Heart left ventricle (tissue), 16 donors: ENCODE measurements at regions of chr4 and their contacts with region 1.

Region 1: GRCh38 chr4:123995936-123996335 is 599.3 kb downstream of the SPRY1 start:
- DNase-seq: no peak
- ATAC-seq: no peak
- H3K4me3 ChIP-seq: no peak overlapping the region
- H3K27ac ChIP-seq: no peak overlapping the region
- H3K4me1 ChIP-seq: peaks cover 0 to 3% (median 0%) of the 10 kb centered on the region in 12 donors
- H3K27me3 ChIP-seq: no peaks in the 10 kb centered on the region
- CTCF ChIP-seq: no peak
- POLR2A ChIP-seq: no peak

Region 2: GRCh38 chr4:123776254-123776653 is 219.7 kb before region 1 on chr4:
- intact Hi-C with region 1: loop called in 1 of 10 experiments (anchors 10 kb)
- DNase-seq: no peak
- ATAC-seq: no peak
- H3K4me3 ChIP-seq: no peak overlapping the region
- H3K27ac ChIP-seq: peak overlapping the region in 3 of 12 donors; percentile 41 to 73 (median 45)
- H3K4me1 ChIP-seq: peaks cover 0 to 21% (median 8%) of the 10 kb centered on the region in 12 donors
- H3K27me3 ChIP-seq: no peaks in the 10 kb centered on the region
- CTCF ChIP-seq: no peak
- POLR2A ChIP-seq: no peak

Region 3: GRCh38 chr4:123913598-123913997 is 82.3 kb before region 1 on chr4:
- intact Hi-C with region 1: no loop called
- DNase-seq: no peak
- ATAC-seq: no peak
- H3K4me3 ChIP-seq: no peak overlapping the region
- H3K27ac ChIP-seq: no peak overlapping the region
- H3K4me1 ChIP-seq: peaks cover 0 to 8% (median 0%) of the 10 kb centered on the region in 12 donors
- H3K27me3 ChIP-seq: no peaks in the 10 kb centered on the region
- CTCF ChIP-seq: no peak
- POLR2A ChIP-seq: no peak